SK-N-SH (cell line): ENCODE measurements at regions of chr6 and their contacts with region 1.

Region 1: GRCh38 chr6:127266178-127266891 is at the start of gene RNF146:
- DNase-seq: peak; percentile 94
- H3K4me3 ChIP-seq: peak within 1 kb of the TSS; percentile 71 to 96
- H3K27ac ChIP-seq: peak within 1 kb of the TSS; percentile 91 to 98
- H3K4me1 ChIP-seq: peaks cover 0 to 5% of the 10 kb centered on the region in 2 experiments; a peak in 2 of 4 replicates
- H3K27me3 ChIP-seq: no peaks in the 10 kb centered on the region; the same call in 1 of the 2 replicates
- CTCF ChIP-seq: peak; percentile 90
- EP300 ChIP-seq: no peak
- RAD21 ChIP-seq: peak; percentile 50
- polyA plus RNA-seq, gene RNF146: 29.2 and 44.3 TPM in 2 replicates

Region 2: DNA sequence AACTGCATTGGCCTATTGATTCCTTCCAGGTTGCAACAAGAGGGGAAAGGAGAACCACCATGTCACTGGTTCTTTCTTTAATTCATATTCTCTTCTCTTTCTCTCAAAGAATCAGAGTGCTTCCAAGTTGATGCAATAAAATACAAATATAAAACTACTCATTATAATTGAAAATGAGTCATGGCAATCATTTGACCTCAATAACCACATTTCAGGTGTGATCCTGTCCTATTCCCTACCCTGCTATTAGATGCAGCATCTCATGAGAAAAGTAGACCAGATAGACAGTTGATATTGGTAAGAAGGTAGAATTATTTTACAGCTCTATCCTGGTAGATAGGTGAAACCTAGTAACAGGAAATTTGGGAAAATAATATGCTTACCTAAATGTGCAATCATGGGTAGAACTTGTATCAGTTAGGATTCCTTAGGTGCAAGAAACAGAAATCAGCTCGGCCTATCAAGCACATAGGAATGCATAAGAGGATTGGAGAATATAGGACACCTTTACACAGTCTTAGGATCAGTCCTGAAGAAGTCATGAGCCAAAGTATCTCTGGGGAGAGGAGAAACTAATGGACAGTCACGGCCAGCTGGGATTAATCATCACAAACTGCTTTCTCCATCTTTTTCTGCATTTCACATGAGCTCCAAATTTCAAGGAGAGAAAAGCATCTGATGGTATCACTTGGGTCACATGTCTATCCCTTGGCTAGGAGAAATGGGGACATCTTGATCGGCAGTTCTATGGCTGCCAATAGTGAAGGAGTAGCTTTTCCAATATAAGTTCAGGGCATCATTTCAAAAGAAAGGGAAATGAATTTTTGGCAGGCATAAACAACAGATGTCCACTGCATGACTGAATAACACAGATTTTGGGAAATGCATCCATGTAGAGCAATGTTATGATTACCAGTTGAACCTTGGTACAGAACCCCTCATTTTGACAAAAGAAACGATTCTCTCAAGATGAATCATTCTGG is 18.9 kb before region 1 on chr6:
- CTCF ChIA-PET with region 1: interaction called, 14 read pairs
- POLR2A ChIA-PET with region 1: no interaction called
- DNase-seq: no peak
- H3K4me3 ChIP-seq: no peak overlapping the region
- H3K27ac ChIP-seq: no peak overlapping the region
- H3K4me1 ChIP-seq: no peaks in the 10 kb centered on the region
- H3K27me3 ChIP-seq: no peaks in the 10 kb centered on the region
- CTCF ChIP-seq: no peak
- EP300 ChIP-seq: no peak
- RAD21 ChIP-seq: no peak

Region 3: GRCh38 chr6:127291495-127291894 is 25.2 kb after region 1 on chr6:
- CTCF ChIA-PET with region 1: interaction called, 10 read pairs
- POLR2A ChIA-PET with region 1: interaction called, 3 read pairs
- DNase-seq: no peak
- H3K4me3 ChIP-seq: no peak overlapping the region
- H3K27ac ChIP-seq: no peak overlapping the region
- H3K4me1 ChIP-seq: no peaks in the 10 kb centered on the region
- H3K27me3 ChIP-seq: no peaks in the 10 kb centered on the region
- CTCF ChIP-seq: no peak
- EP300 ChIP-seq: no peak
- RAD21 ChIP-seq: no peak